PC-9 (cell line): ENCODE measurements at regions of chr7 and their contacts with region 1.

Region 1: GRCh38 chr7:44455155-44455554 is 35.3 kb downstream of the NUDCD3 start:
- DNase-seq: no peak
- H3K4me3 ChIP-seq: no peak overlapping the region
- H3K27ac ChIP-seq: no peak overlapping the region
- H3K4me1 ChIP-seq: no peaks in the 10 kb centered on the region
- H3K27me3 ChIP-seq: no peaks in the 10 kb centered on the region
- CTCF ChIP-seq: no peak

Region 2: GRCh38 chr7:44099669-44100068 is 355.5 kb before region 1 on chr7:
- CTCF ChIA-PET with region 1: interaction called, 17 read pairs
- POLR2A ChIA-PET with region 1: no interaction called
- intact Hi-C with region 1: no loop called
- DNase-seq: no peak
- H3K4me3 ChIP-seq: no peak overlapping the region
- H3K27ac ChIP-seq: no peak overlapping the region
- H3K4me1 ChIP-seq: no peaks in the 10 kb centered on the region
- H3K27me3 ChIP-seq: no peaks in the 10 kb centered on the region
- CTCF ChIP-seq: no peak